Endothelial cell of umbilical vein (primary cell): ENCODE measurements at regions of chr3 and their contacts with region 1.

Region 1: GRCh38 chr3:186930641-186931531 is 560 bp downstream of the ST6GAL1 start:
- DNase-seq: peak; percentile 81
- H3K4me3 ChIP-seq: peak overlapping the region; percentile 66 to 96 (median 83)
- H3K27ac ChIP-seq: peak overlapping the region; percentile 53
- H3K4me1 ChIP-seq: peaks cover 26% of the 10 kb centered on the region
- H3K27me3 ChIP-seq: no peaks in the 10 kb centered on the region
- CTCF ChIP-seq: peak in 1 of 2 donors; percentile 20
- POLR2A ChIP-seq: no peak

Region 2: GRCh38 chr3:185837414-185837813 is 1093.5 kb before region 1 on chr3:
- CTCF ChIA-PET with region 1: no interaction called
- POLR2A ChIA-PET with region 1: no interaction called
- dilution Hi-C with region 1: no loop called
- intact Hi-C with region 1: no loop called
- DNase-seq: no peak
- H3K4me3 ChIP-seq: no peak overlapping the region
- H3K27ac ChIP-seq: no peak overlapping the region
- H3K4me1 ChIP-seq: no peaks in the 10 kb centered on the region
- H3K27me3 ChIP-seq: peaks cover 0 to 1% of the 10 kb centered on the region in 2 experiments
- CTCF ChIP-seq: no peak
- POLR2A ChIP-seq: no peak

Region 3: GRCh38 chr3:185937689-185938463 is 993.0 kb before region 1 on chr3 and contains the start of gene TRA2B:
- CTCF ChIA-PET with region 1: no interaction called
- POLR2A ChIA-PET with region 1: no interaction called
- dilution Hi-C with region 1: no loop called
- intact Hi-C with region 1: loop called (anchors 5 kb)
- DNase-seq: peak; percentile 99
- H3K4me3 ChIP-seq: peak within 1 kb of the TSS; percentile 41 to 98 (median 97)
- H3K27ac ChIP-seq: peak within 1 kb of the TSS; percentile 76
- H3K4me1 ChIP-seq: peaks cover 26% of the 10 kb centered on the region
- H3K27me3 ChIP-seq: peaks cover 0 to 3% of the 10 kb centered on the region in 2 experiments
- CTCF ChIP-seq: peak in 1 of 2 donors; percentile 38
- POLR2A ChIP-seq: peak; percentile 99
- total RNA-seq, gene TRA2B: 199 and 214 TPM in 2 replicates

Region 4: GRCh38 chr3:186810336-186810996 is 120.4 kb before region 1 on chr3:
- CTCF ChIA-PET with region 1: no interaction called
- POLR2A ChIA-PET with region 1: no interaction called
- dilution Hi-C with region 1: no loop called
- intact Hi-C with region 1: no loop called
- DNase-seq: no peak
- H3K4me3 ChIP-seq: no peak overlapping the region
- H3K27ac ChIP-seq: no peak overlapping the region
- H3K4me1 ChIP-seq: peaks cover 11% of the 10 kb centered on the region
- H3K27me3 ChIP-seq: no peaks in the 10 kb centered on the region
- CTCF ChIP-seq: no peak
- POLR2A ChIP-seq: no peak

Region 5: GRCh38 chr3:186821429-186822367 is 109.2 kb before region 1 on chr3:
- CTCF ChIA-PET with region 1: interaction called, 7 read pairs
- POLR2A ChIA-PET with region 1: no interaction called
- dilution Hi-C with region 1: no loop called
- intact Hi-C with region 1: loop called (anchors 1 kb)
- DNase-seq: peak; percentile 61
- H3K4me3 ChIP-seq: peak overlapping the region in 2 of 3 experiments; percentile 21 to 58
- H3K27ac ChIP-seq: no peak overlapping the region
- H3K4me1 ChIP-seq: peaks cover 9% of the 10 kb centered on the region
- H3K27me3 ChIP-seq: no peaks in the 10 kb centered on the region
- CTCF ChIP-seq: peak; percentile 52 to 63
- POLR2A ChIP-seq: no peak

Region 6: DNA sequence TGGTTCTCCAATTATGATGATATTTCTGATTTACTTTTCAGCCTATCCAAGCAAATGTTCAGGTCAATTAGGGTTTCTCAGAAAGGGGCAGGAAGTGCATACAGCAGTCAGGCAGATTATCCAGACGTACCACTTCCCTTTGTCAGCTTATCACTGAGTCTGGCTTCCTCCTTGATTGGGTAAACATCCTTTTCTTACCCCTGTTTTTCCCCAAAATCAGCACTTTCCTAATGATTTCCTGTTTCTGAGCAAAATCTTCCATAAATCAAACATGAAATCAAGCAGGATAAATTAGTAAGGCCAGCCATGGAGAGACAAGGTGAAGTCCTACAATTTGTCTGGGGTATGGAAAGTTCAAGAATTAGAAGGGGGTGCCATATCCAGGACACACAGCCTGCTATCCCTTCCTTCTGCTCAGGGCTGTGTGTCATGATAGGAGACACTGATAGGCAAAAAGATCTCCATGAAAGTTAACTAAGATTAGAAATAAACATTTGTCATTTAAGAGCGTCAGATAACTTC is 59.4 kb before region 1 on chr3:
- CTCF ChIA-PET with region 1: no interaction called
- POLR2A ChIA-PET with region 1: no interaction called
- dilution Hi-C with region 1: no loop called
- intact Hi-C with region 1: loop called (anchors 5 kb)
- DNase-seq: peak; percentile 94
- H3K4me3 ChIP-seq: peak overlapping the region in 1 of 3 experiments; percentile 2
- H3K27ac ChIP-seq: peak overlapping the region; percentile 65
- H3K4me1 ChIP-seq: peaks cover 34% of the 10 kb centered on the region
- H3K27me3 ChIP-seq: no peaks in the 10 kb centered on the region
- CTCF ChIP-seq: no peak
- POLR2A ChIP-seq: peak; percentile 38

Region 7: DNA sequence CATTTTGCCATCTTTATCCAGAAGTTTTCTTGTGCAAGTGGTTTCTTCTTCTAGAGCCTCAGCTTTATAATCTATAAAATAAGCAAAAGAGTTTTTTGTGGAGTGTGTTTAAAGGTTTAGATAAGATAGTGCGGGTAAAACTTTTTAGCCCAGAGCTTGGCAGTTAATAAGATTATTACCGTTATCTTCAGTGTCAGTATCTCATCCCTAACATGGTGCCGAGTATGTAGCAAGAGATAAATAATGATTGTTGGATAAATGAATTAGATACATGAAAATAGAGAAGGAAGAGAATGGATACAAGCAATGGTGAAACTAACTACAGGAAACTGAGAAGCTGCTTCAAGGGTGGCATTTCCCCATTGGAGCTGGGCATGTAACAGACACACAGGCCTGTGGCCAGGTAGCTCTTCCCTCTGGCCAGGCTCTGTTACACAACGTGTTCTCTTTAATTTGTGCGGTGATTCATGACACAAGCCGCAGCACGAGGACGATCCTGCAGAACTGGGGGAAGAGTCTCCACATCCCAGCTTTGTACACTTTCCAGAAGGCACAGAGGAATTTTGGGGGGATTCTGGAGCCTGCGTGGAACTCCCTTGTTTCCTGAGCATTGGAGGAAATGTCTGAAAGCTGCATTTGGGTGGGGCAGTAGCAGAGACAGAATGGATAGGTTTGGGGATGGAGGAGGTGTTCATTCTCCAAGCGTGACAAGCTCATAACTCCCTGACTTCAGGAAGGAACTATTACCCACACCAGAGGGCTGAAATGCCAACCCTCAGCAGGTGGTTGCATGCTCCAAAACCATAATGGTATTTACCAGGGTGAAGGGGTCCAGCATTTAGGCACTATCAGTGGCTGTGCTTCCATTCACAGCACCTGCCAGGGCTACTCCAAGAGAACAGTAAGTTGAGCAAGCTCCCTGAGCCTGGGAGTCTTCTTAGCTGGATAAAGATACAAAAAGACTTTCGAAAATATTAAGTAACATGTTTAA is 14.8 kb before region 1 on chr3:
- CTCF ChIA-PET with region 1: no interaction called
- POLR2A ChIA-PET with region 1: no interaction called
- dilution Hi-C with region 1: no loop called
- intact Hi-C with region 1: no loop called
- DNase-seq: no peak
- H3K4me3 ChIP-seq: no peak overlapping the region
- H3K27ac ChIP-seq: no peak overlapping the region
- H3K4me1 ChIP-seq: no peaks in the 10 kb centered on the region
- H3K27me3 ChIP-seq: no peaks in the 10 kb centered on the region
- CTCF ChIP-seq: no peak
- POLR2A ChIP-seq: no peak

Region 8: DNA sequence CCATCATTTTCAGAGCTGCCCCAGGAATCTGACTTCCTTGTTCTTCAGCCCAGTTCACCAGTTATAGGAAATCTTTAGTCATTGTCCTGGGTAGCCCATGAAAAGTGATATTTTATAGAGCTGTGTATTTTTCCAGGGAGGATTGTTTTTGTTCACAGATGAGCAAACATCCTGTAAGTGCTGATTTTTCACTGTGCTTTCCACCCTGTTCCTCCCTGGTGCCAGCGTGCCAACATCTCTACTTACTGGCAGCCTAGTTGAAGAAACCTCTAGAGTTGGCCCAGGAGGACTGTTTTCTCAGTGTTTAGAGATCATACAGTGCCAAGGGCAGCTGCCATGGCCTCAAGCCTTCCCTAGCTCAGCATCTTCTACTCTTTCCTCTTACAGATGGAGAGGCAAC is 40.7 kb after region 1 on chr3:
- CTCF ChIA-PET with region 1: interaction called, 13 read pairs
- POLR2A ChIA-PET with region 1: interaction called, 3 read pairs
- dilution Hi-C with region 1: no loop called
- intact Hi-C with region 1: loop called (anchors 1 kb)
- DNase-seq: peak; percentile 86
- H3K4me3 ChIP-seq: no peak overlapping the region
- H3K27ac ChIP-seq: peak overlapping the region; percentile 56
- H3K4me1 ChIP-seq: peaks cover 28% of the 10 kb centered on the region
- H3K27me3 ChIP-seq: no peaks in the 10 kb centered on the region
- CTCF ChIP-seq: no peak
- POLR2A ChIP-seq: no peak

Region 9: DNA sequence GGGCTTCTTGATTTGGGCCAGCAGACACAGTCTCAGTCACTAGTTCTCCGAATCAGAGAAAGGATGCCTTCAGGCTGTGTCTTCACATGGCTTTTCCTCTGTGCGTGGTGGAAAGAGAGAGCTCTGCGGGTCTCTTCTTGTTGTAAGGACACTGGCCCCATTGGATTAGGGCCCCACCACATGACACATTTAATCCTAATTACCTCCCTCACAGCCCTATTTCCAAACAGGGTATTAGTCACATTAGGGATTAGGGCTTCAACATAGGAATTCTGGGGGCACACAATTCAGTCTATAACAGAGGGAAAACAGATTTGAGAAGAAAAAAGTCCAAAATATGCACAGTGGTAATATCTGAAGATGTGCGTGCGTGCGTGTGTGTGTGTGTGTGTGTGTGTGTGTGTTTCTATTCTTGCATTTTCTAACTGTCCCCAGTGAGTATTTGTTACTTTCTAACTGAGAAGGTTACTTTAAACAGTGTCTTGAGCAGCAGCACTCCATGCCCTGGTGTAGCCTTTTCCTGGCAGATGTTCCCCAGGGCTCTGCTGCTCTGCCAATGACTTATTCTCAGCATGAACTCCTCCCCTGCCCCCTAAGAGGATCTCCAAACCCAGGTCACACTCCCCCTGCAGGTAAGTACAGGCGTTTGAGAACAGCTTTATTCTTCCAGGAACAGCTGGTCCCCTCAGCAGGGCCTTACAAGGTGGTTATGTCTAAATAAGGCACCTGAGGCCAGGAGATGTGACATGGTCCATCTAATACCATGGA is 135.5 kb after region 1 on chr3:
- CTCF ChIA-PET with region 1: no interaction called
- POLR2A ChIA-PET with region 1: no interaction called
- dilution Hi-C with region 1: no loop called
- intact Hi-C with region 1: loop called (anchors 1 kb)
- DNase-seq: peak; percentile 49
- H3K4me3 ChIP-seq: no peak overlapping the region
- H3K27ac ChIP-seq: no peak overlapping the region
- H3K4me1 ChIP-seq: no peaks in the 10 kb centered on the region
- H3K27me3 ChIP-seq: no peaks in the 10 kb centered on the region
- CTCF ChIP-seq: peak; percentile 17 to 25
- POLR2A ChIP-seq: no peak

Region 10: DNA sequence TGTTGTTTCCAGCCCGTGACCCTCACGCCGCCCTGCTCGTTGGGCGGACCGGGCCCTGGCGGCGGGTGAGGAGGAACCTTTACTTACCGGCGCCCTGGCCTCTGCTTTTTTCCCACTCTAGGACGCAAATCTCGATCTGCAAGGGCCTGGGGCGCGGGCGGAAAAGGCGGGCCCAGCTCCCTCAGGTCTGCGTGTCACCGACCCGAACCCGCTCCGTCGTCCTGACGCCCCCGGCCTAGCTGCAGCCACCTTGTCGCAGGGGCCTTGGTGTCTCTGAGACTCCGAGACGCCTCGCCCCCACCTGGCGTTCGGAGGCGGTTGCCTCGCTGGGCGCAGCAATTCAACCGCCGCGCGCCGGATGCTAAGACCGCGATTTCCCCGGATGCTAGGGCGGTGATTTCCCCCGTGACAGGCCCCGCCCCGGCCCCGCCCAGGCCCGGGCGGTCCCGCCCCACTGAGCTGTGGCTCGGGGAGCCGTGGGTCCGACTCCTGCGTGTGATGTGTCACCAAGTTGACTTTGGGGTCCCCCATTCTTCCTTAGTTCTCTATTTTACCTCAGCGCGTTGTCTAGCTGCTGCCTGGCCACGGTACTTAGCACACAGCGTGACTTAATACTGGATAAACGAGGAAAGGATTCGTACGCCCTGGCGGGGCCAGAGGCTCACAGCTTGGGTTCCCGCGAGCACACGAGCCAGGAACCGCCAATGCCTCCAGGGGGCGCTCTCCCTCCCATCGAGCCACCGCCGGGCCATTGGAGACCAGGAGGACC is 208.4 kb after region 1 on chr3 and contains the start of gene RPL39L:
- CTCF ChIA-PET with region 1: interaction called, 15 read pairs
- POLR2A ChIA-PET with region 1: no interaction called
- dilution Hi-C with region 1: no loop called
- intact Hi-C with region 1: loop called (anchors 1 kb)
- DNase-seq: peak; percentile 87
- H3K4me3 ChIP-seq: peak within 1 kb of the TSS; percentile 44 to 67 (median 54)
- H3K27ac ChIP-seq: peak within 1 kb of the TSS; percentile 55
- H3K4me1 ChIP-seq: peaks cover 4% of the 10 kb centered on the region
- H3K27me3 ChIP-seq: peaks cover 0 to 6% of the 10 kb centered on the region in 2 experiments
- CTCF ChIP-seq: peak; percentile 95 to 97
- POLR2A ChIP-seq: peak; percentile 83
- total RNA-seq, gene RPL39L: 16.8 and 22.3 TPM in 2 replicates

Region 11: GRCh38 chr3:187714404-187714979 is 783.6 kb after region 1 on chr3:
- CTCF ChIA-PET with region 1: no interaction called
- POLR2A ChIA-PET with region 1: no interaction called
- dilution Hi-C with region 1: no loop called
- intact Hi-C with region 1: no loop called
- DNase-seq: peak; percentile 71
- H3K4me3 ChIP-seq: no peak overlapping the region
- H3K27ac ChIP-seq: no peak overlapping the region
- H3K4me1 ChIP-seq: no peaks in the 10 kb centered on the region
- H3K27me3 ChIP-seq: no peaks in the 10 kb centered on the region
- CTCF ChIP-seq: peak; percentile 87 to 89
- POLR2A ChIP-seq: no peak